Motor neuron (in vitro differentiated cells): ENCODE measurements at regions of chr17 and their contacts with region 1.

Region 1: DNA sequence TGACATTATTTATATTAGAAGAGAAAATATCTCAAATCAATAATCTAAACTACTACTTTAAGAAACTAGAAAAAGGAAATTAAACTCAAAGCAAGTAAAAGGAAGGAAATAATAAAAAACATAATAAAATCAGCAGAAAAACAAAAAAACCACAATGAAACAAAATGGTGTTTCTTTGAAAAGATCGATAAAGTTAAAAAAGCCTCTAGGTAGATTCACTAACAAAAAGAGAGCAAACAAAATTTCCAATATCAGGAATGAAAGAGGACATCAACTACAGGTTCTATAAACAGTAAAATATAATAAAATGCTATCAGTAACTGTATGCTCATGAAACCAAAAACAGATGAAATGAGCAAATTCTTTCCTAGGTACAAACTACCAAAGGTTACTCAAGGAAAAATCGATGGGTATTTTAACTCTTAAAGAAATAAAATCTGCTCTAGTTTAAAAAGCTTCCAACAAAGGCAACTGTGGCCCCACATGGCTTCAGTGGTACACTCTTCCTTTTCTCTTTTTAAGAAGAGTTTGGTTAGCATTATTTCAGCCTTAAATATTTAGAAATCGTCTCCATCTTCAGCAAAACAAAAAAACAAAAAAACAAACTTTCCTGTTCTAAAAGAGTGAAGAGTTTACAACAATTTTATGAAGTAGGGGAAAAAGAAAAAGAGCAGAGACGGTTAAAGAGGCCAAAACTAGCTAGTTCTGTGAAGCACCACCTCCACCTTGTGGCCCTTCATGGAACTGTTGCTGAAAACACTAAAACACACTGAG is 102.2 kb downstream of the TRIM37 start:
- ATAC-seq: peak; percentile 38 to 82 (median 62)
- H3K4me3 ChIP-seq: no peak overlapping the region
- H3K27ac ChIP-seq: no peak overlapping the region
- H3K4me1 ChIP-seq: peaks cover 0 to 3% of the 10 kb centered on the region in 2 donors

Region 2: DNA sequence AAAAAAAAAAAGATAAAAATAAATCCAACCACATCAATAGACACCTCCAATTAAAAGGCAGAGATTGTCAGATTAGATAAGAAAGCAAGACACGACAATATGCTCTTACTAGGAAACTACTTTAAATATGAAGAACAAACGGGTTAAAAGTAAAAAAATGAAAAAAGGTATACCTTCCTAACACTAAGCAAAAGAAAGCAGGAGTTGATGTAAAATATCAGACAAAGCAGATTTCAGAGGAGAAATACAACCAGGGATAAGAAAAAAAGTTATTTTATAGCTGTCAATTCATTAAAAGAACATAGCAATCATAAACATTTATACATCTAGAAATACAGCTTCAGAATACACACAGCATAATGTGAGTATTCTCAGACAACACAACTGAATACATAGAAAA is 1209.7 kb before region 1 on chr17:
- in situ Hi-C with region 1: no loop called
- ATAC-seq: no peak
- H3K4me3 ChIP-seq: no peak overlapping the region
- H3K27ac ChIP-seq: no peak overlapping the region
- H3K4me1 ChIP-seq: no peaks in the 10 kb centered on the region

Region 3: GRCh38 chr17:58517734-58518609 is 486.6 kb before region 1 on chr17:
- in situ Hi-C with region 1: loop called in 2 of 9 experiments (anchors 25 kb)
- ATAC-seq: peak; percentile 68 to 87 (median 83)
- H3K4me3 ChIP-seq: peak overlapping the region; percentile 51 to 75 (median 59)
- H3K27ac ChIP-seq: peak overlapping the region; percentile 87 to 89
- H3K4me1 ChIP-seq: peaks cover 9 to 18% of the 10 kb centered on the region in 2 donors

Region 4: DNA sequence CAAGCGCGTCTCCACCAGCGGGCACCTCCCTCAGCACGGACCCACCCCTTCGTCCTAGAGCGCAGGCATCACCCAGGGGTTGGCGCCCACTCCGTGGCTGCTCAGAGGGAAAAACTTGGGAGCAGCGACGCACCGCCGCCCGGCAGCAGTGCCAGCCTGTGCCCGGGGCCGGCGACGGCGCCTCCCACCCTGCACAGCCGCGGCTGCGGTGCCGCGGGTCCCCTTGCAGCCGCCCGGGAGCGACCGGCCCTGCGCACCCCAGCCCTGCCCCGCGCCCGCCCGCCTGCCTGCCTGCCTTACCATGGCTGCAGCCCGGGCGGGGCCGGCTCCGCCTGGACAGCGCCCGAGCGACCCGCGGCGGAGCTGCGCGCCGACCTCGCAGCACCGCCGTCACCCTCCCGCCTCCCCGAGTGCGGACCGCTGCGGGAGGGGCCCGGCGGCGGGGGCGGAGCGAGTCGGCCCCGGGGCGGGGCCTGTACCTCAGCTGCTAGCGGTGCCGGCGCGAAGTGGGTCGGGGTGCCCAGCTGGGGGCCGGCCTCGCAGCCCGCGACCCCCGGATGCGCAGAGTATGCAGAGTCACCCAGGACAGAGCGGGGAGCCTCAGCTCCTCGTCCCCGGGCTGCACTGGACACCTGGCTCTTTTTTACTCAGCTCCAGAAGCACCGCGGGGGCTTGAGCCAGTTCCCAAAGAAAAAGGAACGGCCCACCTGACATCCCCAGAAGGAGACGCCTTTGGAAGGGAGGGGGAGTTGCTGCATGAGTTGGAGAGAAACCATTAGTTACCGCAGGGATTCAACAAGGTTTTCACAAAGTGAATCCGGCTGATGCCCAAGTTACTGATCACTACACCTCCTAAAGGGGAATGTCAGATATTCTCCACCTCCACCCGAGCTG is 472.6 kb before region 1 on chr17:
- in situ Hi-C with region 1: loop called in 1 of 9 experiments (anchors 25 kb)
- ATAC-seq: peak; percentile 76 to 96 (median 93)
- H3K4me3 ChIP-seq: peak overlapping the region; percentile 42 to 61 (median 50)
- H3K27ac ChIP-seq: no peak overlapping the region
- H3K4me1 ChIP-seq: peaks cover 0 to 24% of the 10 kb centered on the region in 2 donors

Region 5: DNA sequence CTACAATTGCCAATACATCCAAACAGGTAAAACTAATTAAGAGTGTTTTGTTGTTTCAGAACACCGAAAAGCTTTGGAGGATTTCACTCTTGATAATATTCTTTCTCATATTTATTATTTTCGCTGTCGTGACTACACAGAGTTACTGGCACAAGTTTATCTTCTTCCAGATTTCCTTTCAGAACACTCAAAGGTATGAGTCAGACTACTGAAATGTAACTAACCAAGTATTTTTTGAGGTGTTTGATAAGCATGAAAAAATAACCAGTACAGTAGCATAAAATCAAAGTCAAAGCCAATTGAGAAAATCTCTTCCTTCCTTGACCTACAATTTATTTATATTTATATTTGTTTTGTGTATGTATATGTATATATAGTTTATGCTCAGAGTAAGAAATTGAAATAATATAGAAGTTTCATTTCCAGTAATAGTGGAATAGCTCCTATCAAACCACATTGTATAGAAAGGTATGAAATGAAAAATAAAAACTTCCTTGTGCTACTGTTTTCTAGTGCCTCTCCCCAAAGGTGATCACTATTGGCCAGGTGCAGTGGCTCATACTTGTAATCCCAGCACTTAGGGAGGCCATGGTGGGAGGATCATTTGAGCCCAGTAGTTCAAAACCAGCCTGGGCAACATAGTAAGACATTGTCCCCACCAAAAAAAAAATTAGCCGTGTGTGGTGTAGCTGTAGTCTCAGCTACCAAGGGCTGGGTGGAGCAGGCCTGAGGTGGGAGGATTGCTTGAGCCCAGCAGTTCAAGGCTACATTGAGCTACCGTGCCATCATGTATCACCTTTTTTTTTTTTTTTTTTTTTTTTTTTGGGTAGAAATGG is 301.2 kb before region 1 on chr17:
- in situ Hi-C with region 1: loop called in 6 of 9 experiments (anchors 10 to 25 kb)
- ATAC-seq: no peak
- H3K4me3 ChIP-seq: no peak overlapping the region
- H3K27ac ChIP-seq: no peak overlapping the region
- H3K4me1 ChIP-seq: no peaks in the 10 kb centered on the region

Region 6: DNA sequence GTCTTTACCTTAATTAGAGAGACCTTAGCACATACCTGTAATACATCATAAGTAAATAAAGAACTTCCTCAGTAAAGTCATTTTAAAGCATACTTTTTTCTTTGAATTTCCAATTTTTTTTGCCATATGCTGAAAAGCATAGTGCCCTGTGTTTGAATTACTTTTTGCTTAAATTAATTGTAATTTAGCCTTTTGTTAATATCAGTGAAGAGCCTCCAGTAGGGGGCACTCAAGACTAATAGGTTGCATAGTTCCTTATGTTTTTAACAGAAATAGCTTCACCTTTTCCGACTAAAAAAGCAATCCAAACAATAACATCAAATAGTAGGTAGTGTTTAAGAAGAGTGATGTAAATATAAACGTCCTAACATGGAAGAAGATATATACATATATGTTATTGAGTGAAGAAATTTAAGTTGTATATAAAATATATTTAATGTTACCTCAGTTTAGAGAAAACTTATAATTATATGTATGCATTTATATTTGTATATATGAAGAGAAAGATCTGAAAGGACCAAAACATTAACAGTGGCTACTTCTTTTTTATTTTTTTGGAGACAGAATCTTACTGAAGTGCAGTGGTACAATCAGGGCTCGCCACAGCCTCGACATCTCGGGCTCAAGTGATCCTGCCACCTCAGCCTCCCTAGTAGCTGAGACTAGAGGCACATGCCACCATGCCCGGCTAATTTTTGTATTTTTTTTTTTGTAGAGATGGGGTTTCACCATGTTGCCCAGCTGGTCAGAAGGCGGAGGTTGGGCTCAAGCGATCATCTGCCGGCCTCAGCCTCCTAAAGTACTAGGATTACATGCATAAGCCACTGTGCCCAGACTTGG is 293.4 kb before region 1 on chr17:
- in situ Hi-C with region 1: loop called (anchors 10 to 25 kb)
- ATAC-seq: peak in 1 of 8 experiments; percentile 25
- H3K4me3 ChIP-seq: no peak overlapping the region
- H3K27ac ChIP-seq: no peak overlapping the region
- H3K4me1 ChIP-seq: no peaks in the 10 kb centered on the region

Region 7: DNA sequence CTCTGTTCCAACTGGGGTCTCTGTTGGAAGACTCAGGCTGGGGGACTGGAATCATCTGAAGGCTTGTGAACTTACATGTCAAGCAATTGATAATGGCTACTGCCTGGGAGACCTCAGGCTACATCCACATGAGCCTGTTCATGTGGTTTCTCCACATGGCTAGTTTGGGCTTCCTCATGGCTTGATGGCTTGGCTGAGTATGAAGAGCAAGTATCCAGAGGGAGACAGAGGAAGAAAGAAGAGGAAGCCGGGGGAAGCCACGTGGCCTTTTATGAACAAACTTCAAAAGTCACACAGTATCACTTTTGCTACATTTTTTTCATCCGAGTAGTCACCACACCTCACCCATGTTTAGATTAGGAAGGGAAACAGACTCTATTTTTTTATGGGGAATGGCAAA is 56.7 kb before region 1 on chr17:
- in situ Hi-C with region 1: no loop called
- ATAC-seq: no peak
- H3K4me3 ChIP-seq: no peak overlapping the region
- H3K27ac ChIP-seq: no peak overlapping the region
- H3K4me1 ChIP-seq: no peaks in the 10 kb centered on the region